Heart right ventricle (tissue), 16 donors: ENCODE measurements at regions of chr17 and their contacts with region 1.

Region 1: GRCh38 chr17:17001874-17002520 is 30.1 kb upstream of the TNFRSF13B start:
- DNase-seq: peak; percentile 70 to 83
- ATAC-seq: peak; percentile 82 to 93 (median 86)
- H3K4me3 ChIP-seq: peak overlapping the region in 1 of 10 donors; percentile 15
- H3K27ac ChIP-seq: no peak overlapping the region
- H3K4me1 ChIP-seq: peaks cover 0 to 13% (median 0%) of the 10 kb centered on the region in 9 donors
- H3K27me3 ChIP-seq: no peaks in the 10 kb centered on the region
- CTCF ChIP-seq: peak; percentile 95 to 99 (median 98)

Region 2: DNA sequence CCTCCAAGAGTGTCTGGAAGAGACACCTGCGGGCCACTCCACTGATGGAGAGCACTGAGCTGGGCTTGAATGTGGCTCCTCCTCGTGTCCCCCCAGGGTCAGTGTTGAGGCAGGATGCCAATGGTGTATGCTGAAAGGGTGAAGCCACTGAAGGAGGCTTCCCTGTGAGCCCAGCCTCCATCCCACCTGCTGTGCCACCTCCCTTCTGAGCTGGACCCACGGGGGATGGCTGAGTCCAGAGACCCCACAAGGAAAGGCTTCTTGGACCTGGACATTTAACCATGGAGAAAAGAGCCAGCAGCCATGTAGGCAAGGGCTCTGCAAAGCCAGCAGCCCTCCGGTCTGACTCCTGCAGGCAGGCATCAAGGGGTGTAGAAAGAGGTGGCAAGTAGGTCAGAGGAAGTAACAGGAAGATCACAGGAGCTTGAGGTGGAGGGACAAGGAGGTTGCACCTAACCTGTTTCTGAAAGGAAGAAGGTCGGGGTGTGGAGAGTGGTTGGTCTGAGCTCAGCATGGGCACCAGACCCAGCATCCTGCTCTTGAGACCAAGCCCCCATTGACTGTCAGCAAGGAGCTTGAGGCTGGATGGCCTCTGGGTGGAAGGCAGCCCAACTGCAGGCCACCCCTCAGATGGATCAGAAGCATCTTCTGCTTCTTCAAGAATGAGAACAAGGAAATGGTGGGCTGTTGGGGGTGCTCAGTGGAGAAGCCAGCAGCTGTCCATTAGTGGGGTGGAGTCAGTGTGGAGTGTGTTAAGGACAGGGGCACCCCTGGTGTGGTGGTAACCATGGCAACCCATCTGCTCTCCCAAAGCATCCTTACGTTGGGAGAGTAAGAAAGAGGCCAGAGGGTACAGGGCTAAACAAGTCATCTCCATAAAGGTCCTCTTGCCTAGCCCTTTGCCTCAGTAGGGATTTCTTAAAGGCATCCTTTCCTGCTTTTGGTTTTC is 123.4 kb after region 1 on chr17:
- intact Hi-C with region 1: loop called in 2 of 10 experiments (anchors 5 to 10 kb)
- DNase-seq: no peak
- ATAC-seq: peak in 1 of 8 donors; percentile 1
- H3K4me3 ChIP-seq: no peak overlapping the region
- H3K27ac ChIP-seq: peak overlapping the region in 8 of 10 donors; percentile 18 to 65 (median 45)
- H3K4me1 ChIP-seq: peaks cover 15 to 92% (median 55%) of the 10 kb centered on the region in 9 donors
- H3K27me3 ChIP-seq: no peaks in the 10 kb centered on the region
- CTCF ChIP-seq: no peak

Region 3: GRCh38 chr17:17141860-17142552 is 140.0 kb after region 1 on chr17:
- intact Hi-C with region 1: loop called in 6 of 10 experiments (anchors 5 to 10 kb)
- DNase-seq: no peak
- ATAC-seq: peak in 5 of 8 donors; percentile 38 to 55 (median 49)
- H3K4me3 ChIP-seq: no peak overlapping the region
- H3K27ac ChIP-seq: peak overlapping the region in 6 of 10 donors; percentile 0 to 60 (median 16)
- H3K4me1 ChIP-seq: peaks cover 5 to 58% (median 23%) of the 10 kb centered on the region in 9 donors
- H3K27me3 ChIP-seq: no peaks in the 10 kb centered on the region
- CTCF ChIP-seq: peak; percentile 59 to 85 (median 81)

Region 4: GRCh38 chr17:17206124-17206912 is 204.3 kb after region 1 on chr17 and contains the start of gene PLD6:
- intact Hi-C with region 1: loop called in 2 of 10 experiments (anchors 10 kb)
- DNase-seq: peak; percentile 65 to 83
- ATAC-seq: peak; percentile 8 to 71 (median 54)
- H3K4me3 ChIP-seq: peak within 1 kb of the TSS; percentile 29 to 64 (median 54)
- H3K27ac ChIP-seq: peak within 1 kb of the TSS; percentile 41 to 87 (median 80)
- H3K4me1 ChIP-seq: peaks cover 23 to 54% (median 38%) of the 10 kb centered on the region in 9 donors
- H3K27me3 ChIP-seq: no peaks in the 10 kb centered on the region
- CTCF ChIP-seq: no peak
- total RNA-seq, gene PLD6: 6.0 to 16.3 (median 8.2) TPM

Region 5: DNA sequence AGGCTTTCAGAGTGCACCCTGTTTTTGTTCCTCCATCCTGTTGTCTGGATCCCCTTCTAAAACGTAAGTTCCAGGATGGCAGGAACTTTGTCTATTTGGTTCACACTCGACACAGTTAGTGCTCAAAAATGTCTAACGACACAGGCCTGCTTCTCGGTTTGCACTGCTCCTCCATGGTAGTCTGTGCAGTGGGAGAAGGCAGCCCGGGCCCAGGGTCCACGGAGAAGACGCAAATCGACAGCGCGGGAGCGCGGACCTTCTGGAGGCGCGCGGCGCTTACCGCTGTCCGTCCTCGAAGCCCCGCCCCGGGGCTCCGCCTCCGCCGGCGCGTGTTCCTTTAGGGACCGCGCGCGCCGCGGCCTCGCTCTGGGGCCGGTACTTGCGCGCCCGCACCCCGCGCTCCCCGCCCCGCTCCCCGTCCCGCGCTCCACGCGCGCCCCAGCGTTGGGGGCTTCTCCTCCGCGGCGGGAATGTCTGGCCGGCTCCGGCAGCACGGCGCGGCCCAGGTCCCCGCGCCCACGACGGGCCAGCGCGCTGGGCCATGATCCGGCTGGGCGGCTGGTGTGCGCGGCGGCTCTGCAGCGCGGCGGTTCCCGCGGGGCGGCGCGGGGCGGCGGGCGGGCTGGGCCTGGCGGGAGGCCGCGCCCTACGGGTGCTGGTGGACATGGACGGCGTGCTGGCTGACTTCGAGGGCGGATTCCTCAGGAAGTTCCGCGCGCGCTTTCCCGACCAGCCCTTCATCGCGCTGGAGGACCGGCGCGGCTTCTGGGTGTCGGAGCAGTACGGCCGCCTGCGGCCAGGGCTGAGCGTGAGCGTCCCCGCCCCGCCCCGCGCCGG is 301.2 kb after region 1 on chr17 and contains the start of gene NT5M:
- intact Hi-C with region 1: loop called in 3 of 10 experiments (anchors 5 to 10 kb)
- DNase-seq: peak; percentile 57 to 78
- ATAC-seq: peak; percentile 77 to 90 (median 87)
- H3K4me3 ChIP-seq: peak within 1 kb of the TSS; percentile 35 to 63 (median 58)
- H3K27ac ChIP-seq: peak within 1 kb of the TSS in 9 of 10 donors; percentile 29 to 74 (median 66)
- H3K4me1 ChIP-seq: peaks cover 0 to 37% (median 19%) of the 10 kb centered on the region in 9 donors
- H3K27me3 ChIP-seq: no peaks in the 10 kb centered on the region
- CTCF ChIP-seq: no peak
- total RNA-seq, gene NT5M: 7.4 to 15.8 (median 9.8) TPM

Region 6: GRCh38 chr17:17641621-17642409 is 639.8 kb after region 1 on chr17:
- intact Hi-C with region 1: loop called in 2 of 10 experiments (anchors 5 to 10 kb)
- DNase-seq: peak; percentile 72 to 85
- ATAC-seq: peak; percentile 80 to 94 (median 87)
- H3K4me3 ChIP-seq: no peak overlapping the region
- H3K27ac ChIP-seq: peak overlapping the region in 1 of 10 donors; percentile 31
- H3K4me1 ChIP-seq: peaks cover 0 to 14% (median 0%) of the 10 kb centered on the region in 9 donors
- H3K27me3 ChIP-seq: peaks cover 0 to 6% (median 0%) of the 10 kb centered on the region in 7 donors
- CTCF ChIP-seq: peak; percentile 81 to 94 (median 89)